Activated naive CD4-positive, alpha-beta T cell treated with anti-CD3 and anti-CD28 coated beads, Interleukin-2, amount 10 ng/mL, durations not matched to agents 7 days and 5 days (primary cell): ENCODE measurements at regions of chr12 and their contacts with region 1.

Region 1: GRCh38 chr12:112198120-112198733 is 72.9 kb downstream of the TRAFD1 start:
- DNase-seq: peak; percentile 73
- H3K4me3 Mint-ChIP-seq: no peak overlapping the region
- H3K27ac Mint-ChIP-seq: no peak overlapping the region
- H3K4me1 Mint-ChIP-seq: no peaks in the 10 kb centered on the region
- H3K27me3 Mint-ChIP-seq: no peaks in the 10 kb centered on the region

Region 2: GRCh38 chr12:112130441-112130998 is 67.7 kb before region 1 on chr12:
- CTCF ChIA-PET with region 1: no interaction called
- DNase-seq: no peak
- H3K4me3 Mint-ChIP-seq: peak overlapping the region; percentile 67
- H3K27ac Mint-ChIP-seq: peak overlapping the region; percentile 93
- H3K4me1 Mint-ChIP-seq: peaks cover 66% of the 10 kb centered on the region
- H3K27me3 Mint-ChIP-seq: no peaks in the 10 kb centered on the region

Region 3: DNA sequence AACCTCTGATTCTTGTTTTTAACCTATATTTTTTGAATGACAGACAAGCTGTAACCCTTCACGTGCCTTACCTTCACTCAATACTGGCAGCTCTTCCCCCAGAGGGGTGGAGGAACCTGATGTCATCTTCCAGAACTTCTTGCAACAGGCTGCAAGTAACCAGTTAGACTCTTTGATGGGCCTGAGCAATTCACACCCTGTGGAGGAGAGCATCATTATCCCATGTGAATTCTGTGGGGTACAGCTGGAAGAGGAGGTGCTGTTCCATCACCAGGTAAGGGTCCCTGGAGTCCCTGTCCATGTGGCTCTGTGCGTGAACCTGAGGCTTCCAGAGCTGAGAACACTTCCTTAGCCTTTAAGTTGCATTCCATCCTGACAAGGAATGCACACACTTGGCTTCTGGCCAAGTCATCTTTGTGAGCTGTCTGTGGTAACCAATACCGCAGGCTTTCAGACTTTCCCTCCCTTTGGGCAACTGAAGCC is 50.2 kb before region 1 on chr12:
- CTCF ChIA-PET with region 1: no interaction called
- DNase-seq: no peak
- H3K4me3 Mint-ChIP-seq: no peak overlapping the region
- H3K27ac Mint-ChIP-seq: no peak overlapping the region
- H3K4me1 Mint-ChIP-seq: peaks cover 9% of the 10 kb centered on the region
- H3K27me3 Mint-ChIP-seq: no peaks in the 10 kb centered on the region

Region 4: GRCh38 chr12:112386726-112387125 is 188.5 kb after region 1 on chr12:
- CTCF ChIA-PET with region 1: interaction called, 60 read pairs
- DNase-seq: no peak
- H3K4me3 Mint-ChIP-seq: no peak overlapping the region
- H3K27ac Mint-ChIP-seq: no peak overlapping the region
- H3K4me1 Mint-ChIP-seq: peaks cover 14% of the 10 kb centered on the region
- H3K27me3 Mint-ChIP-seq: peaks cover 19% of the 10 kb centered on the region

Region 5: GRCh38 chr12:112409906-112410244 is 211.6 kb after region 1 on chr12:
- CTCF ChIA-PET with region 1: interaction called, 12 read pairs
- DNase-seq: no peak
- H3K4me3 Mint-ChIP-seq: peak overlapping the region; percentile 100
- H3K27ac Mint-ChIP-seq: no peak overlapping the region
- H3K4me1 Mint-ChIP-seq: peaks cover 41% of the 10 kb centered on the region
- H3K27me3 Mint-ChIP-seq: peaks cover 4% of the 10 kb centered on the region